K562 (cell line): ENCODE measurements at regions of chr16 and their contacts with region 1.

Region 1: GRCh38 chr16:67796099-67796718 is 10.2 kb downstream of the RANBP10 start:
- DNase-seq: peak in 1 of 4 experiments; percentile 19
- ATAC-seq: peak; percentile 52
- H3K4me3 ChIP-seq: no peak overlapping the region
- H3K27ac ChIP-seq: no peak overlapping the region
- H3K4me1 ChIP-seq: peaks cover 9 to 15% of the 10 kb centered on the region in 2 experiments
- H3K27me3 ChIP-seq: no peaks in the 10 kb centered on the region
- CTCF ChIP-seq: no peak
- EP300 ChIP-seq: no peak
- POLR2A ChIP-seq: no peak
- RAD21 ChIP-seq: no peak

Region 2: GRCh38 chr16:67372664-67373063 is 423.5 kb before region 1 on chr16:
- CTCF ChIA-PET with region 1: no interaction called
- POLR2A ChIA-PET with region 1: no interaction called
- in situ Hi-C with region 1: no loop called
- intact Hi-C with region 1: no loop called
- DNase-seq: peak in 1 of 4 experiments; percentile 33
- ATAC-seq: peak; percentile 61
- H3K4me3 ChIP-seq: no peak overlapping the region
- H3K27ac ChIP-seq: no peak overlapping the region
- H3K4me1 ChIP-seq: no peaks in the 10 kb centered on the region
- H3K27me3 ChIP-seq: peaks cover 18 to 23% of the 10 kb centered on the region in 2 experiments
- CTCF ChIP-seq: peak in 2 of 3 experiments; percentile 42 to 70; a peak in 4 of 6 replicates
- EP300 ChIP-seq: no peak
- POLR2A ChIP-seq: no peak
- RAD21 ChIP-seq: peak; percentile 13 to 61; a peak in 3 of 4 replicates

Region 3: GRCh38 chr16:67781565-67781921 is 14.7 kb before region 1 on chr16:
- CTCF ChIA-PET with region 1: no interaction called
- POLR2A ChIA-PET with region 1: interaction called, 10 read pairs
- in situ Hi-C with region 1: no loop called
- intact Hi-C with region 1: no loop called
- DNase-seq: peak in 2 of 4 experiments; percentile 38 to 56
- ATAC-seq: peak; percentile 72
- H3K4me3 ChIP-seq: no peak overlapping the region
- H3K27ac ChIP-seq: peak overlapping the region; percentile 63
- H3K4me1 ChIP-seq: peaks cover 24 to 25% of the 10 kb centered on the region in 2 experiments
- H3K27me3 ChIP-seq: no peaks in the 10 kb centered on the region
- CTCF ChIP-seq: no peak
- EP300 ChIP-seq: no peak
- POLR2A ChIP-seq: no peak
- RAD21 ChIP-seq: no peak

Region 4: DNA sequence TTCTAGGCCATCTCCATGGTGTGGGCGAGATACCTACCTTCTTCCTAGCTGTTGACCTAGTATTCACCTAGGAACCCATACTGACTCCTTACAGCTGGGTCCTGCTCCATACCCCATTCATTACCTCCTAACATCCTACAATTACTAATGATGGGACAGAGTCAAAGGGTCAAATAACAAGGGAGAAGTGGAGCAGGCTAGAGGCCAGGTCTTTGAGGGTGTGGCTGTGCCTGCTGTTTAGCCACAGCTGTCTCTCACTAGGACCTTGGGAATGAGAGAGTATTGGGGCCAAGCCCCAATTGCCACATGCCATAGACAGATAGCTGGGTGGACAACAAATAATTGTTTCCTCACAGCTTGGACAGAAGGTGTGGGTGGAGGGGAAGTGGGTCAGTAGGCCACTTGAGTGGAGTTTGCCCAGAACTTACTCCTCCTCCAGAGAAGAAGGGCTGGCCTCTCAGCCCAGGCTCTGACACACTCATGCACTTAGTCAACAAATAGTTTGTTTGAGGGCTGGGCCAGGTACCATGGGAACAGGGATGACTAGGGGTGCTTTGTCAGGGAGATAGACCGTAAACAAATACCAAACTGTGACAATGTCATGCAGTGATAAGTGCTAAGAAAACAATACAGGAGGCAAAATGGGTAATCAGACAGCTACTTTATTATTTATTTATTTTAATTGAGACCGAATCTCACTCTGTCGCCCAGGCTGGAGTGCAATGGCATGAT is 61.5 kb after region 1 on chr16:
- CTCF ChIA-PET with region 1: no interaction called
- POLR2A ChIA-PET with region 1: no interaction called
- in situ Hi-C with region 1: no loop called
- intact Hi-C with region 1: no loop called
- DNase-seq: peak; percentile 60 to 76 (median 71)
- ATAC-seq: peak; percentile 83
- H3K4me3 ChIP-seq: no peak overlapping the region
- H3K27ac ChIP-seq: peak overlapping the region; percentile 61; the same call in 2 of the 3 replicates
- H3K4me1 ChIP-seq: peaks cover 19 to 31% of the 10 kb centered on the region in 2 experiments
- H3K27me3 ChIP-seq: no peaks in the 10 kb centered on the region
- CTCF ChIP-seq: no peak
- EP300 ChIP-seq: 0 out of 2 replicates have a peak, but pooled peaks have one; percentile 35
- POLR2A ChIP-seq: no peak
- RAD21 ChIP-seq: no peak